MCF 10A (cell line): ENCODE measurements at regions of chr14 and their contacts with region 1.

Region 1: GRCh38 chr14:67526676-67527459 is 6.2 kb upstream of the PLEKHH1 start:
- DNase-seq: peak; percentile 69
- H3K4me3 Mint-ChIP-seq: no peak overlapping the region
- H3K27ac Mint-ChIP-seq: no peak overlapping the region
- H3K4me1 Mint-ChIP-seq: no peaks in the 10 kb centered on the region
- H3K27me3 Mint-ChIP-seq: peaks cover 37% of the 10 kb centered on the region
- CTCF ChIP-seq: peak; percentile 65

Region 2: DNA sequence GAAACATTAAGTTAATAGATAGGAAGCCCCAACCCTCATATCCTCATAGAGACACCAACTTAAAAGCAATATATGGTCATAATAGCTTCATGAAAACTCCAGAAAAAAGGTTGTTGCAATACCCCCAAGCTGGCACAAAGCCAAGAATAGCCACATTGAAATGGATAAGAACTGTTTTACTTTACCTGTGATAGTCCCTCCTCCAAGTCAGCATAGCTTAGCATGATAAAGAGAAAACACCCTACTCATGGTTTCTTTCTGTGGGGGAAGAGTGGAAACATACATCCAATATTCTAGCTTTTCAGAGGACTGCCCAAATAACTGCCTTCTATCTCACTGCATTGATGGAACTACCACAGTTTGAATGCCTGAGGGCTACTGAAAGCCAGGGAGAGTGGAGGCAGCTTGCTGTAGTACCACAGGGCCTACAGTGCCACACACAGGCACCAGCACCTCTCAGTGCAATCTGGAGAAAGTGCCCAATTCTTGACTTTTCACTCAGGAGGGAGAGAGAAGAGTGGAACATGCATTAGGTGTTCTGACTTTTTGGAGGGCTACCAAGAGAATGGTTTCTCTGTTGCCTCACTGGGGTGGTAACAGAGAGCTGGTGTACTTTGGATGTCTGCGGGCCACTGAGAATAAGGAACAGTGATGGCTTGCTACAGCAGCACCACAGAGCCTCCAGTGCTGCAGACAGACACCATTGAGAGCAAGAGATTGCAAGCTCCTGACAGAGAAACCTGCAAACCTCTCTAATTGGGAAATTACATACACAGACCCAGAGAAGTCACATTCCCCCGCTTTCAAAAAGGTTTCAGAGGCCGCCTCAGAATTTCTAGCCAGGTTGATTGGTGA is 494.7 kb before region 1 on chr14:
- CTCF ChIA-PET with region 1: no interaction called
- POLR2A ChIA-PET with region 1: no interaction called
- intact Hi-C with region 1: no loop called
- DNase-seq: no peak
- H3K4me3 Mint-ChIP-seq: no peak overlapping the region
- H3K27ac Mint-ChIP-seq: no peak overlapping the region
- H3K4me1 Mint-ChIP-seq: no peaks in the 10 kb centered on the region
- H3K27me3 Mint-ChIP-seq: no peaks in the 10 kb centered on the region
- CTCF ChIP-seq: no peak

Region 3: DNA sequence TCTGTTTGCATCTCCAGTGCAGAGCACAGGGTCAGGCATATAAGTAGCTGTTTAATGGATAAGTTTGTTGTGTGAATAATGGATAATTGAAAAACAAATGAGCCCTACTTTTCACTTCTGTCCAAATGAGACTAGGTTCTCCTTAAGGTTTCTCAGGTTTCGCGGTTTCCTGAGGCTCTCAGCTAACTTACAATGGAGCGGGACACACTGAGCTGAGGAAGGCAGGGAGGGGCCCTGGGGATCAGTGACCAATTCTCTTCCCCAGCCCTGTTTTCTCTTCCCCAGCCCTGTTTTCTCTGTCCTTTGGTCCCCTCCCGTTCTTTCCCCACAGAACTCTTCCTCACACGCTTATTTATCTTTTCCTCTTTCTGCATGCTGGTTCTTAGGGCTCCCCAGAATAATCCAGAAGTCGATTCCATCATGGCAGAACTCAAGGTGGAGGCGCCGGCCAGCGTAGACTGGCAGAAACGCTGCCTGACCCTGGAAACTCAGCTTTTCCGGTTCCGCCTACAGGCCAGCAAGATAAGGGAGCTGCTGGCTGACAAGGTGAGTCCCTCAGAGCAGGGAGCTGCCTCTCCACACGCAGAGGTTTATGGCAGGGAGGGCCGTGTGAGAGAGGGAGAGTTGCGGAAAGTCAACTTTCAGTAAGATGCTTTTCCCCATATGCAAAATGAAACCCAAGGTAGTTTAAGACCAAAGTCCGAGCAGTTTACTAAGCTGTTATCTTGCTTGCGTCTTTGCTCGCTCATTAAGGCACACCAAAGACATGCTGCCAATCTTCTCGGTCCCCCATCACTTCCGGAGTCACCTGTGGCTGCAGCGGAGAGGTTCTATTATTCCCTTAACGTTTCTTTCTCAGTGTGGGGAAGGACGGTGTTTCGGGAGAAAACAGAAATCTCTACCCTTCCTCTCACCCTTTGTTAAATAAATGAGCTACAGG is 14.8 kb after region 1 on chr14:
- CTCF ChIA-PET with region 1: interaction called, 27 read pairs
- POLR2A ChIA-PET with region 1: no interaction called
- intact Hi-C with region 1: no loop called
- DNase-seq: no peak
- H3K4me3 Mint-ChIP-seq: no peak overlapping the region
- H3K27ac Mint-ChIP-seq: no peak overlapping the region
- H3K4me1 Mint-ChIP-seq: no peaks in the 10 kb centered on the region
- H3K27me3 Mint-ChIP-seq: no peaks in the 10 kb centered on the region
- CTCF ChIP-seq: no peak

Region 4: DNA sequence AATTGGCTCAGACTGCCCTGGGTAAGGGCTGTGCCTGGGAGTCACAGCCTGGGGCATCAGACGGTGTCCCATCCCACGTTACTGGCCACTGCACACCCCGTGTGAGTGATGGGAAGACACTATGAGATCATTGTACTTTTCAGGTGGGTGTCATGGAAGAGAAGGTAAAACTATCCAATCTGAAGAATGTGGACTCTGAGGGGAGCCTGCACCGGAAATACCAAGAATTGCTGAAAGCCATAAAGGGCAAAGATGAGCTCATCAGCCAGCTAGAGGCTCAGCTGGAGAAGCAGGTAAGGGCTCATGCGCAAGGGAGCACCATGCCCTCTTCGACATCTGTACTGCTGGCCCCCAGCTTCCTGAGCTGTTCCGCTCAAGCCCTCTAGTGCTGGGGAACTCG is 30.3 kb after region 1 on chr14:
- CTCF ChIA-PET with region 1: interaction called, 75 read pairs
- POLR2A ChIA-PET with region 1: no interaction called
- intact Hi-C with region 1: no loop called
- DNase-seq: peak; percentile 26
- H3K4me3 Mint-ChIP-seq: no peak overlapping the region
- H3K27ac Mint-ChIP-seq: no peak overlapping the region
- H3K4me1 Mint-ChIP-seq: peaks cover 12% of the 10 kb centered on the region
- H3K27me3 Mint-ChIP-seq: no peaks in the 10 kb centered on the region
- CTCF ChIP-seq: no peak

Region 5: GRCh38 chr14:67666750-67667449 is 140.0 kb after region 1 on chr14:
- CTCF ChIA-PET with region 1: interaction called, 18 read pairs
- POLR2A ChIA-PET with region 1: no interaction called
- intact Hi-C with region 1: loop called (anchors 2 kb)
- DNase-seq: peak; percentile 72
- H3K4me3 Mint-ChIP-seq: no peak overlapping the region
- H3K27ac Mint-ChIP-seq: peak overlapping the region; percentile 27
- H3K4me1 Mint-ChIP-seq: peaks cover 17% of the 10 kb centered on the region
- H3K27me3 Mint-ChIP-seq: no peaks in the 10 kb centered on the region
- CTCF ChIP-seq: peak; percentile 73

Region 6: DNA sequence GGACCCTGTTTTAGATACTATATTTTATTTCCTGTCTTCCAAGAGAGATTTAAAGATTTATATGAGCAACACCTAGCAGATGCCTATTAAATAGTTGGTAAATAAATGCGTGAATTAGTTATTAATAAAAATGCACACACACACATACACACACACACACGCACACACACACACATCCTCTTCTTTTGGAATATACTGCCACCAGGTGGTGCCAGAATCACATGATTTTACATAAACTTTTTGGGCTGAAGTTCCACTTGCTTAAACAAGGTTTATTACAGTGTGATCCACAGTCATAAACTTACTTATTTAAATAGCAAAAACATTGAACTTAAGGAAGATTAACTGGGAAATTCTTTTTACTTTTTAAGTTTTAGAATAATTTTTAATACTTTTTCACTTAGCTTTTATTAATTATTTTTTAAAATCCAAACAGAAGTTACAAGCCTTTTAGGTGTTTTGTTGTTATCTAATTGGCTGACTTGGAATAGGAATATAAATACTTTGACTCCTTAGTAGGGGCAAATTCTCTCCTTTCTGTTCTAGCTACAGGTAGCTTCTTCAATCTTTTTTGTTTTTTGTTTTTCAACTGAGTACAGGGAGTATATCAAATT is 310.2 kb after region 1 on chr14:
- CTCF ChIA-PET with region 1: no interaction called
- POLR2A ChIA-PET with region 1: no interaction called
- intact Hi-C with region 1: no loop called
- DNase-seq: peak; percentile 73
- H3K4me3 Mint-ChIP-seq: no peak overlapping the region
- H3K27ac Mint-ChIP-seq: no peak overlapping the region
- H3K4me1 Mint-ChIP-seq: no peaks in the 10 kb centered on the region
- H3K27me3 Mint-ChIP-seq: no peaks in the 10 kb centered on the region
- CTCF ChIP-seq: peak; percentile 73

Region 7: GRCh38 chr14:67963960-67964744 is 437.3 kb after region 1 on chr14:
- CTCF ChIA-PET with region 1: no interaction called
- POLR2A ChIA-PET with region 1: no interaction called
- intact Hi-C with region 1: no loop called
- DNase-seq: peak; percentile 74
- H3K4me3 Mint-ChIP-seq: peak overlapping the region; percentile 52
- H3K27ac Mint-ChIP-seq: peak overlapping the region; percentile 91
- H3K4me1 Mint-ChIP-seq: peaks cover 32% of the 10 kb centered on the region
- H3K27me3 Mint-ChIP-seq: no peaks in the 10 kb centered on the region
- CTCF ChIP-seq: no peak

Region 8: DNA sequence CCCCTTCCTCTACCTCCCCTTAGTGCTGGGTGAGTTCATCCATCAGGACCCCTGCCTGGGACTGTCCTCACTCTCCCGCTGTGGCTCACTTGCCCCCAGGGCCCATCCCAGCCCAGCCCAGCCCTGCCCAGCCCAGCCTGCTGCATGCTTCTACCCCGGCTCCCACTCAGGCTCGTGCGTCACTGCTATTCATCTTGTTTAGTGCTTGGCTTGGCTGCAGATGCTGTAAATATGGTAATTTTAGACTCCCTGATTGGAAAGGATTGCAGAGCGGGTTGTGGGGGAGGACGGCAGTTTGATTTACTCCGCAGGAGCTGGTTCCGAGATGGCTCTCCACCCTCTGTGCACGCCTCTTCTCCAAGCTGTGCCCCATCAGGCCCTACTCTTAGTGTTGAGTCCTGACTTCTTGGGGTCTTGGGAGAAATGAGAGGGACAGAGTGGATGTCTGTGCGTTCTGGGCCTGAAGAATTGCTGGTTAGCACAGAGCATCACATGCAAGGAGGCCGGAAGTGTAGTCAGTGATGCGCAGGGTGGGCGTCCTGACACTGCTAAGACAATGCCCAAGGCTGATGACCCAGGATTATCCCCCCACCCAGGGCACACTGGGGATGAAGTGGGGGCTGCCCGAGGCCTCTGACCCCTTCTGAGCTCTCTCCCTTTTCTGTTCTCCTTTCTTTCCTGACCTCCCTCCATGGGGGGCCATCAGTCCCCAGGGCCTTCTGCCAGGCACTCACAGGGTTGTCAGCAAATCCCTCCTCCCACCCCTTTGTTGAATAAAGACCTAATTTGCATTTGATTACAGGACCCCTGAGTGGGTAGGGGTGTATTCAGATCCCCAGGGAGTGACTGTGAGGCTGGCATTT is 1021.6 kb after region 1 on chr14:
- CTCF ChIA-PET with region 1: no interaction called
- POLR2A ChIA-PET with region 1: no interaction called
- intact Hi-C with region 1: no loop called
- DNase-seq: peak; percentile 98
- H3K4me3 Mint-ChIP-seq: peak overlapping the region; percentile 69
- H3K27ac Mint-ChIP-seq: peak overlapping the region; percentile 98
- H3K4me1 Mint-ChIP-seq: peaks cover 86% of the 10 kb centered on the region
- H3K27me3 Mint-ChIP-seq: no peaks in the 10 kb centered on the region
- CTCF ChIP-seq: no peak